ENCODE measurements at regions of chrX and their contacts with region 1.

Region 1: GRCh38 chrX:39855748-39856129 is 242.0 kb downstream of the BCOR start:
- DNase-seq: peak; percentile 76
- H3K4me3 Mint-ChIP-seq: peak overlapping the region; percentile 80
- H3K27ac Mint-ChIP-seq: peak overlapping the region; percentile 99
- H3K4me1 Mint-ChIP-seq: peaks cover 84% of the 10 kb centered on the region
- H3K27me3 Mint-ChIP-seq: no peaks in the 10 kb centered on the region

Region 2: GRCh38 chrX:39815631-39816030 is 40.1 kb before region 1 on chrX:
- CTCF ChIA-PET with region 1: interaction called, 10 read pairs
- POLR2A ChIA-PET with region 1: interaction called, 3 read pairs
- DNase-seq: no peak
- H3K4me3 Mint-ChIP-seq: no peak overlapping the region
- H3K27ac Mint-ChIP-seq: no peak overlapping the region
- H3K4me1 Mint-ChIP-seq: peaks cover 33% of the 10 kb centered on the region
- H3K27me3 Mint-ChIP-seq: peaks cover 5% of the 10 kb centered on the region

Region 3: GRCh38 chrX:39834600-39834999 is 21.1 kb before region 1 on chrX:
- CTCF ChIA-PET with region 1: interaction called, 17 read pairs
- POLR2A ChIA-PET with region 1: no interaction called
- DNase-seq: no peak
- H3K4me3 Mint-ChIP-seq: no peak overlapping the region
- H3K27ac Mint-ChIP-seq: no peak overlapping the region
- H3K4me1 Mint-ChIP-seq: no peaks in the 10 kb centered on the region
- H3K27me3 Mint-ChIP-seq: no peaks in the 10 kb centered on the region

Region 4: DNA sequence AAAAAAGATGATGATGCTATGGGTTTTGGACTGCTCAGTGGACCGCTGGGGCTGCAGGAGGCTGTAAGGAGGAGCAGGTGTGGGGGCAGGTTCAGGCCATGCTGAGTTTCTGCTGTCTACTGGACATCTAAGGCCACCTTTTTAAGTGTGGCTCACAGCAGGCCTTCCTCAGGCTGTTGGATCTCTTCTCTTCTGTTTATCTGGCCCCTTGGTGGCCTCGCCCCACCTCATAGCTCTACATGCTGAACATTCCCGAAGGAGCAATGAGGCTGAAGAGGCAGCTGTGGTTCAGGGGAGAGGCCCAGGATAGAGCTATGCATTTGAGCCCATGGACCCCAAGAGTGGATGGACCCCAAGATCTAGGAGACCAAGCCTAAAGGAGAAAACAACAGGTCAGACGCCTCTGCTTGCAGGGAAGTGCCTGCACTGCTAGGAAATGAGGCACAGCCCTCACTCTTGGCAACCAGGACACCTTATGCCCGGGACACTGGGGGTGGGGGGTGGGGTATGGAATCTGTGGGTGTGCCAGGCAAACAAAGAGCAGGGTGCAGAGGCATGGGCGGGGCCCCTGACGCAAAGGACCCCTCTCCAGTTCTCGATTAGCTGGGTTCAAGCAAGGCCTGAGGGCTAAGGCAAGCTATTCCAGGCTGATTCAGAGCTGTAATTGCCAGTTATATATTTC is 73.1 kb after region 1 on chrX:
- CTCF ChIA-PET with region 1: no interaction called
- POLR2A ChIA-PET with region 1: no interaction called
- DNase-seq: no peak
- H3K4me3 Mint-ChIP-seq: no peak overlapping the region
- H3K27ac Mint-ChIP-seq: peak overlapping the region; percentile 19
- H3K4me1 Mint-ChIP-seq: no peaks in the 10 kb centered on the region
- H3K27me3 Mint-ChIP-seq: no peaks in the 10 kb centered on the region

Region 5: DNA sequence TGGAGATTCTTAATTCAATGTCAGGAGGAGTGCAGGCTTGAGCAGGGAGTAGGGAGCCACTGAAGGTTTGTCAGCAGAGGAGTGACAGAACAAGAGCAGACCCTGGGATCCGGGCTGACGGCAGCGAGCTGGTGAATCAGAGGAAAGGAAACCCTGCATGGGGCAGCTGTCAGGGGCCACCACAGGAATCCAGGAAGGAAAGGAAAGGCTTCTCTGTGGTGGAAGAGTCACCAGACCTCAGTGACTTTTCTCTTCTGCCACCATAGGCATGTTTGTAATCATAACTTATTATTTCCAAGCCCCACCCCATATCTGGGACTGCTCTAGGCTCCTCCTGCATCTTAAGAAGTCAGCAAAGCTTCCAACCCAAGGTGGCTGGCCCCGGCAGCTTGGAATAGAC is 91.1 kb after region 1 on chrX:
- CTCF ChIA-PET with region 1: no interaction called
- POLR2A ChIA-PET with region 1: no interaction called
- DNase-seq: no peak
- H3K4me3 Mint-ChIP-seq: no peak overlapping the region
- H3K27ac Mint-ChIP-seq: no peak overlapping the region
- H3K4me1 Mint-ChIP-seq: peaks cover 17% of the 10 kb centered on the region
- H3K27me3 Mint-ChIP-seq: peaks cover 2% of the 10 kb centered on the region